ENCODE measurements at regions of chr10 and their contacts with region 1.

Region 1: GRCh38 chr10:62437696-62438095 is 63.5 kb downstream of the ZNF365 start:
- DNase-seq: peak; percentile 82
- ATAC-seq: peak; percentile 81
- H3K4me3 ChIP-seq: no peak overlapping the region
- H3K27ac ChIP-seq: no peak overlapping the region
- H3K4me1 ChIP-seq: peaks cover 2% of the 10 kb centered on the region
- H3K27me3 ChIP-seq: no peaks in the 10 kb centered on the region
- CTCF ChIP-seq: peak; percentile 83
- POLR2A ChIP-seq: no peak
- RAD21 ChIP-seq: peak; percentile 83

Region 2: GRCh38 chr10:62268399-62269114 is 169.1 kb before region 1 on chr10 and contains the start of gene RTKN2:
- CTCF ChIA-PET with region 1: interaction called, 5 read pairs
- POLR2A ChIA-PET with region 1: no interaction called
- dilution Hi-C with region 1: no loop called
- in situ Hi-C with region 1: no loop called
- intact Hi-C with region 1: loop called (anchors 5 kb)
- DNase-seq: peak; percentile 76
- ATAC-seq: peak; percentile 87
- H3K4me3 ChIP-seq: peak within 1 kb of the TSS; percentile 68
- H3K27ac ChIP-seq: peak within 1 kb of the TSS; percentile 9; the same call in 1 of the 2 replicates
- H3K4me1 ChIP-seq: peaks cover 2% of the 10 kb centered on the region; the same call in 1 of the 2 replicates
- H3K27me3 ChIP-seq: peaks cover 6% of the 10 kb centered on the region; the same call in 1 of the 2 replicates
- CTCF ChIP-seq: no peak
- POLR2A ChIP-seq: peak; percentile 35; the same call in 1 of the 2 replicates
- RAD21 ChIP-seq: no peak
- total RNA-seq, gene RTKN2: 0.90 and 2.2 TPM in 2 replicates

Region 3: DNA sequence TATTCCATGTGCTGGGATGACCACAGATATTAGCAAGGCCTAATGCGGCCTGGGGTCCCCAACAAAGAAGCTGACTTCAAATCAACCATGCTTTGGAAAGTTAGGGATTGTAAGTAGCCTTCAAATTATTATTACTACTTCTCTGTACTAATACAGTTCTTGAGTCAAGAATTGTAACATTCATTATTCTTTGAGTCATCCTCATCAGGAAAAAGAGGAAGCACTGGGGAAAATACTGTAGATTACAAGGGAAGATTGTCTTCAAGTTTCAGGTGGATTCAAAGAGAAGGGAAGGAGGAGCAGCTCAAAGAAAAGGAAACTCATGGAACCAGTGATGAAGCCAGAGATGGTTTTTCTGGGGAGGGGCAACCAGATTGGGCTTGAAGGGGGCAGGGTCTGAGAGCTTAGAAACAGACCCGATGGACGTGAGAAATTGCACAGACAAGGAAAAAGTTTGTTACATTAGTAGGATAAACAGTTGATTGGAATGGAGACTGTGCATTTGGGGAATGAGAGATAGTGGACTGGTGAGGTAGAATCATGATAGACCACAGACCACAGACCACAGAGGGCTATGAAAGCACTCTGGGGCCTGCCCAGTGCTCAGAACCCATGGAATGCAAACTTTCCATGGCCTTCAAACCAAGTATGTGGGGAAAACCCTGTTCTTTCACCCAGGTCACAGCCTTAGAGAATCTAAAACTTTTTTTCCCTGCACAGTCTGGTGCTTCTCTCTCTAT is 146.3 kb after region 1 on chr10:
- CTCF ChIA-PET with region 1: no interaction called
- POLR2A ChIA-PET with region 1: no interaction called
- dilution Hi-C with region 1: no loop called
- in situ Hi-C with region 1: no loop called
- intact Hi-C with region 1: loop called (anchors 2 kb)
- DNase-seq: peak; percentile 98
- ATAC-seq: peak; percentile 73
- H3K4me3 ChIP-seq: no peak overlapping the region
- H3K27ac ChIP-seq: peak overlapping the region; percentile 45; the same call in 1 of the 2 replicates
- H3K4me1 ChIP-seq: peaks cover 30% of the 10 kb centered on the region
- H3K27me3 ChIP-seq: no peaks in the 10 kb centered on the region
- CTCF ChIP-seq: no peak
- POLR2A ChIP-seq: no peak
- RAD21 ChIP-seq: 0 out of 2 replicates have a peak, but pooled peaks have one; percentile 7

Region 4: DNA sequence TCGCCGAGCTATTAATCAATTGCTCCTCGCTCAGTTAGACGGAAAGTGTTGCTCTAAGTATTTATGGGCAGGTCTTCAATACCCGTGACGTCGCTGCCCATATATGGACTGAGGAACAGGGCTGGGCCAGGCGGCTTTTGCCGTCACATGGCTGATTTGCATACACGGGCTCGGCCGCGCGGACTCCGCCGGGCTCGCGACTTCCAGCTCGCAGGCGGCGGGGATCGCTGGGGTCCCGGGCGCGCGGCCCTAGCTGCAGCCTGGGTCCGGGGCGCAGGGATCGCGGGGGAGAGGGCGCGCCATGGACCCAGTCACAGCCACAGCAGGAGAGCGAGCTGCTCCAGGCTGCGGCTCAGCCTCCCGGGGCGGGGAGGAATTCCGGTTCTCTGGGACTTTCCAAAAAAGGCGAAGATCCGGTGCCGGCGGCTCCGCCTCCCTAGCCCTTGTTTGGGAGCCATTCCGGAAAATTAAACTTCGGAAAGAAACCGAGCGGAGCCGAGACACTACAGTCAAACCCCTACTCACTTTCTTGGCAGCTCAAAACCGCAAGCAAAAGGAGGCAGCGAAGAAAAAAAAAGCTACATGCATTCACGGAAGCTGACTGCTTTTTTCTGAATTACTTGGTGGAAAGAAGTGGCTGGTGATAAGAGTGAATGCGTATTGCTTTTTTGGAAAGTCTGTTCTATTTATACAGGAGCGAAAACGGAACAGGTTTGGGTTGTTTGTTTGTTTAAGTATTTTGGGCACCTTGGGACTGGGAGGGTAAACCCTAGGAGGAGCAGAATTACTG is 378.8 kb after region 1 on chr10 and contains the start of gene EGR2:
- CTCF ChIA-PET with region 1: interaction called, 3 read pairs
- POLR2A ChIA-PET with region 1: interaction called, 3 read pairs
- dilution Hi-C with region 1: no loop called
- in situ Hi-C with region 1: loop called (anchors 5 kb)
- intact Hi-C with region 1: loop called (anchors 1 kb)
- DNase-seq: peak; percentile 94
- ATAC-seq: peak; percentile 91
- H3K4me3 ChIP-seq: peak within 1 kb of the TSS; percentile 73
- H3K27ac ChIP-seq: peak within 1 kb of the TSS; percentile 53
- H3K4me1 ChIP-seq: peaks cover 7% of the 10 kb centered on the region; the same call in 1 of the 2 replicates
- H3K27me3 ChIP-seq: peaks cover 48% of the 10 kb centered on the region
- CTCF ChIP-seq: no peak
- POLR2A ChIP-seq: peak; percentile 50
- RAD21 ChIP-seq: no peak
- total RNA-seq, gene EGR2: 0.36 and 0.56 TPM in 2 replicates

Region 5: GRCh38 chr10:63491588-63492316 is 1054.1 kb after region 1 on chr10:
- CTCF ChIA-PET with region 1: no interaction called
- POLR2A ChIA-PET with region 1: no interaction called
- dilution Hi-C with region 1: no loop called
- in situ Hi-C with region 1: no loop called
- intact Hi-C with region 1: no loop called
- DNase-seq: peak; percentile 74
- ATAC-seq: peak; percentile 88
- H3K4me3 ChIP-seq: no peak overlapping the region
- H3K27ac ChIP-seq: peak overlapping the region; percentile 95
- H3K4me1 ChIP-seq: peaks cover 5% of the 10 kb centered on the region
- H3K27me3 ChIP-seq: no peaks in the 10 kb centered on the region
- CTCF ChIP-seq: no peak
- POLR2A ChIP-seq: no peak
- RAD21 ChIP-seq: no peak